Activated CD8-positive, alpha-beta T cell treated with anti-CD3 and anti-CD28 coated beads for 36 hours (primary cell): ENCODE measurements at regions of chr7 and their contacts with region 1.

Region 1: GRCh38 chr7:54596747-54597146 is 54.6 kb downstream of the VSTM2A start:
- DNase-seq: no peak
- ATAC-seq: no peak
- H3K4me3 Mint-ChIP-seq: no peak overlapping the region
- H3K27ac Mint-ChIP-seq: no peak overlapping the region
- H3K4me1 Mint-ChIP-seq: no peaks in the 10 kb centered on the region
- H3K27me3 Mint-ChIP-seq: no peaks in the 10 kb centered on the region
- CTCF ChIP-seq: no peak

Region 2: DNA sequence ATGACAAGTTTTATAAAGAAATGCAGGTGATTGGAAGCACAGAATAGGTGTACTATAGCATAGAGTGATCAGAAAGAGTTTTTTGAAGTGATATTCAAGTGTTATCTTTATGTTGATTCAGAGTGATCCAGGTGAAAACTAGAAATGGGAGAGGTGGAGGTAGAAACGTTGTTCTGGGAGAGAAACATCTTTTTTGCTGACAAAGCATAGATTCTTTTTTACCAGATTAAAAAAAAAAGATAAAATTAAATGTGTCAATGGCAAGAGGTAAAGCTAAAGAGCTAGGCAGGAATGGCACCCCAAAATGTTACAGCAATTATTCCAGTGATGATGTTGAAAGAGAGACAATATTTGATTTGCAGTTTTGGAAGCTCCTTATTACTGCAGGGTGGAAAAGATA is 67.2 kb before region 1 on chr7:
- CTCF ChIA-PET with region 1: no interaction called
- POLR2A ChIA-PET with region 1: no interaction called
- intact Hi-C with region 1: no loop called
- DNase-seq: no peak
- ATAC-seq: no peak
- H3K4me3 Mint-ChIP-seq: no peak overlapping the region
- H3K27ac Mint-ChIP-seq: no peak overlapping the region
- H3K4me1 Mint-ChIP-seq: no peaks in the 10 kb centered on the region
- H3K27me3 Mint-ChIP-seq: no peaks in the 10 kb centered on the region
- CTCF ChIP-seq: no peak

Region 3: DNA sequence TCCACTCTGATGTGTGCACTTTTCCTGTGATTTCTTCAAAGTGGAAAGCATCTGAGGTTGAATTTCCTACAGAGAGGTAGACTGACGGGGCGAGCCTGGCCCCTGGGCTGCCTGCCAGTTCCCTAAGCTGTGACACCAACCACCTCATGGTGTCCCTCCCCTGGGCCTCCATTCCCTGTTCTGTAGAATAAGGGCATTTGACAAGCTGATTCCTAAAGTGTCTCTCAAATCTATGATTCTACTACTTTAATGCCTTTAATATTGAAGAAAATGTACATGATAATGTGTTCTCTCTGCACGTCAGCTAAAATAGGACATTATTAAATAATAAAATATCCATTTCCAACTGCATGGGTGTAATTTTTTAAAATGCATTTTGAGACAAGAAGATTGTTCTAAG is 57.2 kb after region 1 on chr7:
- CTCF ChIA-PET with region 1: interaction called, 3 read pairs
- POLR2A ChIA-PET with region 1: no interaction called
- intact Hi-C with region 1: loop called (anchors 5 kb)
- DNase-seq: no peak
- ATAC-seq: no peak
- H3K4me3 Mint-ChIP-seq: no peak overlapping the region
- H3K27ac Mint-ChIP-seq: no peak overlapping the region
- H3K4me1 Mint-ChIP-seq: no peaks in the 10 kb centered on the region
- H3K27me3 Mint-ChIP-seq: no peaks in the 10 kb centered on the region
- CTCF ChIP-seq: no peak